MCF 10A (cell line): ENCODE measurements at regions of chr3 and their contacts with region 1.

Region 1: DNA sequence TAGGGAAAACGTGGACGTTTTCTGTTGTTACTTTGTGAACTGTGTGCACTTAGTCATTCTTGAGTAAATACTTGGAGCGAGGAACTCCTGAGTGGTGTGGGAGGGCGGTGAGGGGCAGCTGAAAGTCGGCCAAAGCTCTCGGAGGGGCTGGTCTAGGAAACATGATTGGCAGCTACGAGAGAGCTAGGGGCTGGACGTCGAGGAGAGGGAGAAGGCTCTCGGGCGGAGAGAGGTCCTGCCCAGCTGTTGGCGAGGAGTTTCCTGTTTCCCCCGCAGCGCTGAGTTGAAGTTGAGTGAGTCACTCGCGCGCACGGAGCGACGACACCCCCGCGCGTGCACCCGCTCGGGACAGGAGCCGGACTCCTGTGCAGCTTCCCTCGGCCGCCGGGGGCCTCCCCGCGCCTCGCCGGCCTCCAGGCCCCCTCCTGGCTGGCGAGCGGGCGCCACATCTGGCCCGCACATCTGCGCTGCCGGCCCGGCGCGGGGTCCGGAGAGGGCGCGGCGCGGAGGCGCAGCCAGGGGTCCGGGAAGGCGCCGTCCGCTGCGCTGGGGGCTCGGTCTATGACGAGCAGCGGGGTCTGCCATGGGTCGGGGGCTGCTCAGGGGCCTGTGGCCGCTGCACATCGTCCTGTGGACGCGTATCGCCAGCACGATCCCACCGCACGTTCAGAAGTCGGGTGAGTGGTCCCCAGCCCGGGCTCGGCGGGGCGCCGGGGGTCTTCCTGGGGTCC is at the start of gene TGFBR2:
- DNase-seq: peak; percentile 98
- H3K4me3 Mint-ChIP-seq: peak within 1 kb of the TSS; percentile 86
- H3K27ac Mint-ChIP-seq: peak within 1 kb of the TSS; percentile 93
- H3K4me1 Mint-ChIP-seq: peaks cover 35% of the 10 kb centered on the region
- H3K27me3 Mint-ChIP-seq: no peaks in the 10 kb centered on the region
- CTCF ChIP-seq: peak; percentile 21
- total RNA-seq, gene TGFBR2: 103 and 104 TPM in 2 replicates

Region 2: DNA sequence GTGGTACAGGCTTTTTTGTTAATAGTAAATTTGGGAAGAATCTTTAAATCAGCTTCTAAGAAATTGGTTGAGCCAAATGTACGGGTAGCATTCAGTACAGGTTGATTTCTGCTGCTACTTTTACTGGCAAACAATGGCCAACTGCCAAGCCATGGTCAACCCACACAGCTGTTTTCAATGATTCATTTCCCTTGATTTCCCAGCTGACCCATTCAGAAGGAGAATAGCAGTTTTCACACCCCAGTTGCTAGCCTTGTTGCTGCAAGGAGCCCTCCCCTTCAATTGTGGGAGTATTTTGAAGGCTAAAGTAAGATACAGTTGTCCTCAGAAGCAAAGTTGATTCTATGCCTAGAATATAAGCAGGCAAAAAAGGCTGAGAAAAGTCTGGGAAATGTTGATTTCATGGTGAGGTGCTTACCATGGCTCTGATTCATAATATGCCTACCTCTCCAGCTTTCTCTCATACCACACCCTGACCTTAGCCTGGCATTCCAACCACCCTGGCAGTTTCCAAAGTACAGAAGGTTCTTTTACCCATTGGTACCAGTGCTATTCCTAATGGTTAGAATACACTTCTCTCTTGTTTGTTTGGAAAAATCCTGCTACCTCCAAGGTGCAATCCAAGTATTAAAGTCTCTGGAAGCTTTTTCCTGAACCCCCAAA is 320.3 kb before region 1 on chr3:
- CTCF ChIA-PET with region 1: no interaction called
- POLR2A ChIA-PET with region 1: interaction called, 11 read pairs
- intact Hi-C with region 1: loop called (anchors 5 kb)
- DNase-seq: peak; percentile 97
- H3K4me3 Mint-ChIP-seq: peak overlapping the region; percentile 26
- H3K27ac Mint-ChIP-seq: peak overlapping the region; percentile 69
- H3K4me1 Mint-ChIP-seq: peaks cover 58% of the 10 kb centered on the region
- H3K27me3 Mint-ChIP-seq: no peaks in the 10 kb centered on the region
- CTCF ChIP-seq: no peak

Region 3: GRCh38 chr3:30347679-30348216 is 258.7 kb before region 1 on chr3:
- CTCF ChIA-PET with region 1: interaction called, 5 read pairs
- POLR2A ChIA-PET with region 1: interaction called, 29 read pairs
- intact Hi-C with region 1: loop called (anchors 5 kb)
- DNase-seq: peak; percentile 85
- H3K4me3 Mint-ChIP-seq: no peak overlapping the region
- H3K27ac Mint-ChIP-seq: peak overlapping the region; percentile 76
- H3K4me1 Mint-ChIP-seq: peaks cover 54% of the 10 kb centered on the region
- H3K27me3 Mint-ChIP-seq: no peaks in the 10 kb centered on the region
- CTCF ChIP-seq: no peak

Region 4: DNA sequence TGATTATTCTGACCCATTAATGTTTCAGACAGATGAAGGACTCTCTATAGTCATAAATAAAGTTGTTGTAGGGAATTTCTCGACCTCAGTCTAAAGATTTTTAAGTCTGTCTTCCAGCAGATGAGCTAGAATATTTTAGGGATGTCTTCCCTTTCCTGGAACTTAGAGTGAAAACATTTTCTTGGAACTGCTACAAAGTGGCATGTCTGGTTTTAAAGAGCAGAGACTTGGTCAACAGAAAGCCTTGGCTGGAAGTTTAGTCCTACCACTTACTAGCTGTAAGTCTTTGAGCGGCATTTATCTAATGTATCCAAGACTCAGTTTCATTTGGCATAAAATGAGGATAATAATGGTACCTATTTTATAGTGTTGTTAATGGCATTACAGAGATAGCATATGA is 120.1 kb before region 1 on chr3:
- CTCF ChIA-PET with region 1: no interaction called
- POLR2A ChIA-PET with region 1: no interaction called
- intact Hi-C with region 1: no loop called
- DNase-seq: no peak
- H3K4me3 Mint-ChIP-seq: no peak overlapping the region
- H3K27ac Mint-ChIP-seq: no peak overlapping the region
- H3K4me1 Mint-ChIP-seq: no peaks in the 10 kb centered on the region
- H3K27me3 Mint-ChIP-seq: no peaks in the 10 kb centered on the region
- CTCF ChIP-seq: no peak

Region 5: DNA sequence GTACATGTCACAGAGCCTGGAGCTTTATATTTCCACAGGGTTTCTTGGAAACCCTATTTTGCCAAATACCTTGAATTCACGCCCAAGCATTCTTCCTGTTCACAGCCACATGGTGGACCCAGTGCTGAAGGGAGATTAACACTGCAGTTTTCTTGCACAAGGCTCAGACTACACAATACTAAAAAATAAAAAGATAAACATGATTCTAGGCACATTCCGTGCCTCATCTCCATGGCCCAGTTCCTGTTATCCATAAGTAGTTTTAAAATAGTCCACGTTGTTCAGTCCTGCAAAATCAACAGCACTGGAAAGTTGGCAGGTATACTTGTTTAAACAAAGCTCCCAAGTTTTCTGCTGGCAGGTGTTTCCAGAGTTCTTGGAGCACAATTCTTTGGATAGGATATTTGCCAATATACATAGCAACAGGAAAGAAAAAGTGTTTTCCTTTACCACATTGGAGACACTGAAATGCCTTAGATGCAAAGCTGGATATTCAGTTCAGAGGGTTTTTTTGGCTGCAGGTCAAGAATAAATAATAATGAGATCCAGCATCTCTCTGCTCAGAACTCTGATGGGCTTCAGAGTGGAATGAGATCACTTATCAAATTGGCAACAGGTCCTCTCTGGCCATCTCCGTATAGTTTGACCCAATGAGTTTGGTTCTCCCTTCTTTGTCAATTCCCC is 88.1 kb before region 1 on chr3:
- CTCF ChIA-PET with region 1: interaction called, 5 read pairs
- POLR2A ChIA-PET with region 1: interaction called, 123 read pairs
- intact Hi-C with region 1: loop called (anchors 2 kb)
- DNase-seq: peak; percentile 96
- H3K4me3 Mint-ChIP-seq: peak overlapping the region; percentile 4
- H3K27ac Mint-ChIP-seq: peak overlapping the region; percentile 89
- H3K4me1 Mint-ChIP-seq: peaks cover 46% of the 10 kb centered on the region
- H3K27me3 Mint-ChIP-seq: no peaks in the 10 kb centered on the region
- CTCF ChIP-seq: no peak

Region 6: DNA sequence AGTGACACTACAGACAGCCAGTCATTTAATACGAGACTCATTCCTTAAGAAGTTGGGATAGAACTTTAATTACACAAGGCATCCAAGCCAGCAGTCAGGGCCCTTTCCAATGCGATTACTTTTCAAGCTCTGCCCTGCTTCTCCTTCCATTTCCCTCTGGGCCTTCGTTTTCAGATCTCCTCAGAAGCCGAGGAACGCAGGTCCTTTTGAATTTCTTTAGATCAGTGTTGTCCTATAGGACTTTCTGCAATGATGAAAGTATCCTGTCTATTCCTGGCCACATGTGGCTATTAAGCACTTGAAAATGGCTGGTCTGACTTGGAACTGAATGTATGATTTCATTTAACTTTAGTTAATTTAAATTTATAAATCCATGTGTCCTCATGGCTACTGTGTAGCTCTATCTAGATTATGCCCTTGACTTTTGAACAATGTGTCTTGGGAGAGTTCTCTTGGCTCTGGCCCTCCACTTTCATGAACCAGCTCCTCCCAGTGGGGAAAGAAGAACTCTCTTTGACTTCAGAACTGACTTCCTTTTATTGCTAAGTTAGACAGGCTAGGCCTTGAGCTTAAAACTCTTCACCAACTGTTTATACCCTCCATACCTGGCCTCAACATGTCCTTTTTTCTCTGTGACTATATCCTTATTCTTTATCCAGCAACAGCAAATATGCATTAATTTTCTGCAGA is 22.6 kb after region 1 on chr3:
- CTCF ChIA-PET with region 1: interaction called, 4 read pairs
- POLR2A ChIA-PET with region 1: interaction called, 190 read pairs
- intact Hi-C with region 1: loop called (anchors 2 kb)
- DNase-seq: no peak
- H3K4me3 Mint-ChIP-seq: peak overlapping the region; percentile 19
- H3K27ac Mint-ChIP-seq: peak overlapping the region; percentile 77
- H3K4me1 Mint-ChIP-seq: peaks cover 63% of the 10 kb centered on the region
- H3K27me3 Mint-ChIP-seq: no peaks in the 10 kb centered on the region
- CTCF ChIP-seq: peak; percentile 9

Region 7: DNA sequence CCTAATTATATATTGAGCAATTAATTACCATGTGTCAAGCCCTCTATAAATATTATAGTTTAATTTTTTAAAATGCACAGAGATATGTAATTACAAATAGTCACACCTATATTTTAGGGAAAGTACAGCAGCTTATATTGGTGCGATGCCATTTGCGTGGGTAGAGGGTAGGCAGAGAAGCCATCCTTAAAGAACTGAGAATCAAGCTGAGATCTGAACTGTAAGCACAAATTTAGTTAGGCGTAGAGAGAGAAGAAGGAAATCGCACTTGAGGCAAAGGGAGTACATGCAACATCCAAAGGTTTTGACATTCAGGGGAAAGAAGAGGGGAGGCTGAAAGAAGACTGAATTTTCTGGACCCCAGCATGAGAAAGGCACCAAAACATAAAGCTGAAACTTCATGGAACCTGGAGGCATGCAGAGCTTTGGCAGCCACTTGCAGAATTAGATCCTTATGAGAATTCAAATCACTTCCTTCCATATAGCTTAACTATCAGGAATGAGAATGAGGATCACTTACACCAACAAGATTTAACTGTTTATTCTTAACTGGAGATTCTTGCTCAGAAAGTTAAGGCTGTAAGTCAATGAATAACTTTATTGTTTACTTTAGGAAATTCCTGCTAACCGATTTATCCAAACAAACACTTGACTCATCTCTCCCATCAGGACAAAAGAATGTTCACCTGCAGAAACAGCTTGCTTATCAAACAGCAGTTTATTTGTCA is 114.3 kb after region 1 on chr3:
- CTCF ChIA-PET with region 1: no interaction called
- POLR2A ChIA-PET with region 1: no interaction called
- intact Hi-C with region 1: no loop called
- DNase-seq: peak; percentile 55
- H3K4me3 Mint-ChIP-seq: peak overlapping the region; percentile 3
- H3K27ac Mint-ChIP-seq: peak overlapping the region; percentile 23
- H3K4me1 Mint-ChIP-seq: peaks cover 15% of the 10 kb centered on the region
- H3K27me3 Mint-ChIP-seq: no peaks in the 10 kb centered on the region
- CTCF ChIP-seq: no peak

Region 8: DNA sequence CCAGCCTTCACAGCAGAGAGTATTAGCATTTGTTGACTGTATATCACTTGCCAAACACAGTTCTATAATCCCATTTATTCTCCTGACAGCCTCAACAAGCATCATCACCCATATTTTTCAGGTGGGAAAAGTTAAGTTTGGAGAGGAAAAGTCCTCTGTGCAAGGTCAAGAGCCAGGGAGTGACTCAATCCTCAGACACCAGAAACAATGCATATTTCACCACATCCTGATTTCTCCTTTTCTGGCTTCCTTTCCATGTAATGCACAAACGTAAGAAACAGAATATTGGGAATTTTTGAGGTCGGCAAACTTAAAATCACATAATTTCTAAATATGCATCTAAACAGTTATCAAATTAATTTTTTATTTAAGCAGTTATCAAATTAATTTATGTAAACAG is 404.0 kb after region 1 on chr3:
- CTCF ChIA-PET with region 1: no interaction called
- POLR2A ChIA-PET with region 1: no interaction called
- intact Hi-C with region 1: no loop called
- DNase-seq: peak; percentile 59
- H3K4me3 Mint-ChIP-seq: no peak overlapping the region
- H3K27ac Mint-ChIP-seq: no peak overlapping the region
- H3K4me1 Mint-ChIP-seq: peaks cover 24% of the 10 kb centered on the region
- H3K27me3 Mint-ChIP-seq: no peaks in the 10 kb centered on the region
- CTCF ChIP-seq: no peak